ENCODE measurements at regions of chr9 and their contacts with region 1.

Region 1: GRCh38 chr9:126690431-126691350 is 77.0 kb downstream of the LMX1B start:
- DNase-seq: peak; percentile 24
- ATAC-seq: peak; percentile 87
- H3K4me3 ChIP-seq: no peak overlapping the region
- H3K27ac ChIP-seq: no peak overlapping the region
- H3K4me1 ChIP-seq: 0 out of 4 replicates have a peak, but pooled peaks cover 0 to 3% of the 10 kb centered on the region in 2 experiments
- H3K27me3 ChIP-seq: no peaks in the 10 kb centered on the region
- CTCF ChIP-seq: peak; percentile 71 to 86 (median 78)
- POLR2A ChIP-seq: no peak
- RAD21 ChIP-seq: peak; percentile 59

Region 2: DNA sequence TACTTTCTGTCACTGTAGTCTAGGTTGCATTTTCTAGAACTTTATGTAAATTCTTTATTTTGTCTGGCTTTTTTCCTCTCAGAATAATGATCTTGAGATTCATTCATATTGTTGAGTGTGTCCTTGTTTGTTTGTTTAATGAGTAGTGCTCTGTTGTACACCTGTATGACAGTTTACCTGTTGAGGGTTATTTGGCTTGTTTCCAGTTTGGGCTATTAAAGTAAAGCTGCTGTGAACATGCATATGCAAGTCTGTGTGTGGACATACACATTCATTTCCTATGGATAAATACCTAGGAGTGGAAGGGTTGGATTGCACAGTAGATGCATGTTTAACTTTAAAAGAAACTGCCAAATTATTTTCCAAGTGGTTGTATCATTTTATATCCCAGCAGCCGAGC is 333.6 kb before region 1 on chr9:
- CTCF ChIA-PET with region 1: no interaction called
- POLR2A ChIA-PET with region 1: no interaction called
- RAD21 ChIA-PET with region 1: no interaction called
- intact Hi-C with region 1: no loop called
- DNase-seq: no peak
- ATAC-seq: no peak
- H3K4me3 ChIP-seq: no peak overlapping the region
- H3K27ac ChIP-seq: no peak overlapping the region
- H3K4me1 ChIP-seq: no peaks in the 10 kb centered on the region
- H3K27me3 ChIP-seq: no peaks in the 10 kb centered on the region
- CTCF ChIP-seq: no peak
- POLR2A ChIP-seq: no peak
- RAD21 ChIP-seq: no peak

Region 3: DNA sequence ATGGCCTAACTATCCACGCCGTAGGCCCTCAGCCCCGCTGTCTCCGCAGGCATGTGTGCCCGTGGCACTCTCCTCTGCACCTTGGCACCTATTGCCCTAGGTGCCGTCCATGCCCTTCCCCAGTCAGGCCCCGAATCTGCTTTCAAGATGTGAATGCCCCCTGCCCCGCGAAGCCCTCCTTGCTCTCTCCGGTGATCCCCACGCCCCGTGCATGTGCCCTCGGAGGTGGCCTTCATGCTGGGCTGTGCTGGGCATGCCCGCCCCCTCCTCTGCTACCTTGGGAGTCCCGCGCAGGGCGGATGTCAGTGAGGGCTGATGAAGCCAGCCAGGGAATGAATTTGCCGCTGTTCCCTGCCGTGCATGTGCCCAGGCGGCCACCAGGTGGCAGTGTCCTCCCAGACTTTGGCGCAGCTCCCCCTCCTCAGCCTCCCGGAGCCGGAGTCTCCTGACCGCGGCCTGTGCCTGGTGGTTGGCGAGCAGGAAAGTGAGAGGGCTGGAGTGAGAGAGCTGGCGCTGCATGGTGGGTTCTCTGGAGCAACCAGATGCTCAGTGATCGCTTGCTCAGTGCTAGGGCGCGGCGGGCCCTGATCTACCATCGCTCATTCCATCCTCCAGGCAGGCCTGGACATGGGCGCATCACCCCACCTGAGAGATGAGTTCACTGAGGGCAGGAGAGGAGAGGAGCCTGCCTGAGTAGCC is 189.9 kb before region 1 on chr9:
- CTCF ChIA-PET with region 1: interaction called, 3 read pairs
- POLR2A ChIA-PET with region 1: no interaction called
- RAD21 ChIA-PET with region 1: no interaction called
- intact Hi-C with region 1: loop called (anchors 2 kb)
- DNase-seq: peak; percentile 19
- ATAC-seq: peak; percentile 82
- H3K4me3 ChIP-seq: no peak overlapping the region
- H3K27ac ChIP-seq: no peak overlapping the region; the same call in 1 of the 2 replicates
- H3K4me1 ChIP-seq: peaks cover 0 to 13% of the 10 kb centered on the region in 2 experiments; a peak in 1 of 4 replicates
- H3K27me3 ChIP-seq: no peaks in the 10 kb centered on the region
- CTCF ChIP-seq: peak; percentile 87 to 90 (median 88)
- POLR2A ChIP-seq: no peak
- RAD21 ChIP-seq: peak; percentile 91

Region 4: DNA sequence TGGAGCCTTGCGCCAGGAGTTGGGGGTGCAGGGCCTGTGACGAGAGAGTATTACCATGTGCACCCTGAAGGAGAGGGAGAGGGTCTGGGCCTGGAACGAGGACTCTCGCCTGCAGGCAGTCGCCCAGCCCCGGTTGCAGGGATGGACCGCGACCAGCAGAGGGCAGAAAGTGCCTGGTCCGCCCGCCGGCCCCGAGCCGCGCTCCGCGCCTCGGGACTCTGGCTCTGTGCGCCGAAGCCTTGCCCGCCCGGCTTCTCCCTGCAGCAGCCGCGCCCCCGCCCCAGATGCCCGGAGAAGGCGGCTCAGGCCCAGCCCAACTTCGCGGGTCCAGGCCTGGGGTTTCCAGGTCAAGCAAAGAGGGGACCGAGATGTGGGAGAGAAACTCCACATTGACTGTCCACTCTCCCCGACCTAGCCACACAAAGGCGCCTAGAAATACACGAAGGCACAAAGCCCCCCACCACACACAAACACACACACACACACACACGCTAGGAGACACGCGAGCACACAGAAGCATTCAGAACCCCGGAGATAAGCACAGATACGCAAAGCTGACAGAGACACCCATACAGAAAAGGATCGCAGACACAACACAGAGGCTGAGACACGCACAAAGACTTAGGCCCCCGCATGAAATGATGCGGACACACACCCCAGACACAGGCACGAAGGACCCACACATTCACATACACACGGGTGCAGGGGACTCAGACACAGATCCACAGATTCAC is 78.9 kb before region 1 on chr9:
- CTCF ChIA-PET with region 1: interaction called, 8 read pairs
- POLR2A ChIA-PET with region 1: no interaction called
- RAD21 ChIA-PET with region 1: no interaction called
- intact Hi-C with region 1: loop called (anchors 1 kb)
- DNase-seq: peak; percentile 32
- ATAC-seq: peak; percentile 84
- H3K4me3 ChIP-seq: no peak overlapping the region; a peak in 1 of 4 replicates
- H3K27ac ChIP-seq: no peak overlapping the region
- H3K4me1 ChIP-seq: peaks cover 7 to 30% of the 10 kb centered on the region in 2 experiments; a peak in 3 of 4 replicates
- H3K27me3 ChIP-seq: no peaks in the 10 kb centered on the region
- CTCF ChIP-seq: peak; percentile 74 to 78 (median 77)
- POLR2A ChIP-seq: no peak
- RAD21 ChIP-seq: peak; percentile 81

Region 5: GRCh38 chr9:126661521-126662220 is 29.0 kb before region 1 on chr9:
- CTCF ChIA-PET with region 1: interaction called, 14 read pairs
- POLR2A ChIA-PET with region 1: no interaction called
- RAD21 ChIA-PET with region 1: interaction called, 4 to 6 read pairs
- intact Hi-C with region 1: no loop called
- DNase-seq: peak; percentile 12
- ATAC-seq: peak; percentile 61
- H3K4me3 ChIP-seq: no peak overlapping the region
- H3K27ac ChIP-seq: peak overlapping the region; percentile 62
- H3K4me1 ChIP-seq: peaks cover 30 to 45% of the 10 kb centered on the region in 2 experiments
- H3K27me3 ChIP-seq: no peaks in the 10 kb centered on the region
- CTCF ChIP-seq: no peak
- POLR2A ChIP-seq: no peak
- RAD21 ChIP-seq: no peak

Region 6: GRCh38 chr9:126676685-126677143 is 14.0 kb before region 1 on chr9:
- CTCF ChIA-PET with region 1: interaction called, 41 read pairs
- POLR2A ChIA-PET with region 1: no interaction called
- RAD21 ChIA-PET with region 1: no interaction called
- intact Hi-C with region 1: no loop called
- DNase-seq: no peak
- ATAC-seq: no peak
- H3K4me3 ChIP-seq: no peak overlapping the region
- H3K27ac ChIP-seq: no peak overlapping the region
- H3K4me1 ChIP-seq: no peaks in the 10 kb centered on the region; a peak in 1 of 4 replicates
- H3K27me3 ChIP-seq: no peaks in the 10 kb centered on the region
- CTCF ChIP-seq: no peak
- POLR2A ChIP-seq: no peak
- RAD21 ChIP-seq: no peak

Region 7: DNA sequence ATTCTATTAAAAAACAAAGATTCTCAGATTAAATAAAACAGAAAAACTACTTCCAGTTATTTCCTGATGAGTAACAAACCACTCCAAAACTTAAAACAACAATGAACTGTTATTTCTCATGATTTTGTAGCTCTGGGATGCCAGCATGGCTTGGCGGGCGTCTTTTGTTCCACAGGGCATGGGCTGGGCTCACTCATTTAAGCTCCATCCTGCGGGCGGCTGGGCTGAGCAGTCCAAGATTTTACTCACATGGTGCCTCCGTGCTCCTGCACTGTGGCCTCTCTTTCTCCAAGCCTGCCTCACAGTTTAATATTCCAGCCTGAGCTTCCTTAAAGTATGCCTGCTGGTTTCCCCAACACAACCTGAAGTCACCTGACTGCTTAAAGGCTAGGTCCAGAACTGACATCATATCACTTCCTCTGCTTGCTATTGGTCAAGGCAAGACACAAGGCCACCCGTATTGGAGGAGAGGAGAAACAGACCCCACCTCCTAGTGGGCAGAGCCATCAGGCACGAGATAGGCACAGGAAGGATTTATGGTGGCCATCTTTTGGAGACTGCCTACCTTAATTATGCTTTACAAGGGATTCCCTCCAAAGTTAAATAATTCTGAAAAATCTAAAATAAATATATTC is 72.6 kb after region 1 on chr9:
- CTCF ChIA-PET with region 1: no interaction called
- POLR2A ChIA-PET with region 1: no interaction called
- RAD21 ChIA-PET with region 1: no interaction called
- intact Hi-C with region 1: no loop called
- DNase-seq: peak; percentile 65
- ATAC-seq: peak; percentile 98
- H3K4me3 ChIP-seq: peak overlapping the region; percentile 20 to 28; a peak in 2 of 4 replicates
- H3K27ac ChIP-seq: no peak overlapping the region
- H3K4me1 ChIP-seq: peaks cover 0 to 3% of the 10 kb centered on the region in 2 experiments; a peak in 1 of 4 replicates
- H3K27me3 ChIP-seq: no peaks in the 10 kb centered on the region
- CTCF ChIP-seq: no peak
- POLR2A ChIP-seq: no peak
- RAD21 ChIP-seq: no peak